WTC11 (cell line): ENCODE measurements at regions of chr2 and their contacts with region 1.

Region 1: DNA sequence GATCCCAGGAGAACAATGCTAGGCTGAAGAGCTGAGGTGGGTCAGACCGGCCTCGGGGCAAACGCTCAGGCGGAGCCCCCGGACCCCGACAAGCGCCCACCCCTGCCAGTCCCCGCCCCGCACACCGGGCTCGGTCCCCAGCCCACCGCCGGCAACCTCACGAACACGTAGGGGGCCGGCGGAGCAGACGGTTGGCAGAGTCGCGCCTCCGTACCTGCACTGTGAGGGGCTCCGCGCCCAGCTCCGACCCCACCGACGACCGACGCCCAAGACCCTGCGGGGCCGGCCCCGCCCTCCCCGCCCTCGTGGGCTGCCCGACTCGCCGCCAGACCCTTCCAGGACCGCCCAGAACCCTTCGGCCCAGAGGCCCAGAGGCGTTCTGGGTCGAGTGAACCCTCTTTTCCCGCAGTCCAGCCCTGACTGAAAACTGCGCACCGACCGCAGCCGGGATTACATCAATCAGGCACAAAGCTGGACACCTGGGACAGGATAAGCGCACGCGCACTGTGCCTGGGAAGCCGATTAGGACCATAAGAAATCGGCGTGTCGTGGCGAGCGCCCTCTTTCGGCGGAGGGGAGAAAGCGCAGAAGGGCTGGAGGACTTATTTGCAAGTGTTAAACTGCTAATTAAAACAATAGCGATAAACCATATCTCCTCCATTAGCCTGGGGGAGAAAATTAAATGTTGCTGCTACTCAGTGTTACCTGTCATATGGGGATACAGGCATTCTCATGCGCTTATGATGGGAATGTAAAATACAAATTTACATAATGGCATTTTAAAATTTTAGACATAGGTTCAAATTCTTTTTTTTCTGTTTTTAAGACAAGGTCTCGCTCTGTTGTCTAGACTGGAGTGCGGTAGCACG is 11.7 kb upstream of the DCTN1 start:
- DNase-seq: peak; percentile 96
- ATAC-seq: peak; percentile 87
- H3K4me3 Mint-ChIP-seq: no peak overlapping the region; the same call in 1 of the 2 replicates
- H3K27ac Mint-ChIP-seq: peak overlapping the region; percentile 99
- H3K4me1 Mint-ChIP-seq: peaks cover 4% of the 10 kb centered on the region; the same call in 1 of the 2 replicates
- H3K27me3 Mint-ChIP-seq: no peaks in the 10 kb centered on the region; the same call in none of the 2 replicates
- CTCF ChIP-seq: peak; percentile 92

Region 2: DNA sequence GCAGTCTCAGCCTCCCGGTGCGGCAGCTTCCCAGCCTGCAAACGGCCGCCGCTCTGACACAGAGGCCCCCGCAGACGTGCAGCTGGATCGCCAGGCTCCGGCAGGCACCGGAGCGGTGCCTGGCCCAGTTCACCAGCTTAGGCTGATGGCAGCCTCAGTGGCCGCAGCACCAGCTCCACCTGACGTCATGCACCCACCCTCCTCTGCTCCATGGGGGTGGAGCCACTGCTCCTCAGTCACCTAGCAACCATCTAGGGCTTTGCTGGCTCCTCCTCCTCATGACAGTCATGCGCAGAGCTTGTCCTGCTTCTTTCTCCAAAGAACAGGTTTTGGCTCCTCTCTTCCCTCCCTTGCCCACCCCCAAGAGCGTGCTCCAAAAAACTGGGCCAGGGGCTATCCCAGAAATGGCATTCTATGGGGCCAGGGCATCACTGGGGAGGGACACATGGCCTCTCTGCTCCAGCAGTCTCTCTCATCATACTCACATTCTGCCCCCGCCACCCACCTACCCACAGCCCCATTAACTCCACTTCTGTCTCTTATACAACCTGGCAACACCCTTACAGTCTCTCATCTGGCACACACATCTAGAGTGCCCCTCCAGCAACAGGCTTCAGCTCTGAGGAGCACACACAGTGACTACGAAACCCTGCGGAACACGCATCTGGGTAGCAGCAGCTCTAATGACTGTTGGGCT is 17.2 kb before region 1 on chr2:
- CTCF ChIA-PET with region 1: interaction called, 35 read pairs
- POLR2A ChIA-PET with region 1: interaction called, 7 read pairs
- DNase-seq: peak; percentile 87
- ATAC-seq: peak; percentile 97
- H3K4me3 Mint-ChIP-seq: peak overlapping the region; percentile 83
- H3K27ac Mint-ChIP-seq: peak overlapping the region; percentile 98
- H3K4me1 Mint-ChIP-seq: peaks cover 36% of the 10 kb centered on the region
- H3K27me3 Mint-ChIP-seq: no peaks in the 10 kb centered on the region
- CTCF ChIP-seq: no peak

Region 3: GRCh38 chr2:74379851-74380789 is 11.7 kb before region 1 on chr2 and contains the start of gene DCTN1:
- CTCF ChIA-PET with region 1: interaction called, 35 read pairs
- POLR2A ChIA-PET with region 1: interaction called, 12 read pairs
- DNase-seq: peak; percentile 46
- ATAC-seq: peak; percentile 92
- H3K4me3 Mint-ChIP-seq: peak within 1 kb of the TSS; percentile 16
- H3K27ac Mint-ChIP-seq: peak within 1 kb of the TSS; percentile 83; the same call in 1 of the 2 replicates
- H3K4me1 Mint-ChIP-seq: peaks cover 21% of the 10 kb centered on the region
- H3K27me3 Mint-ChIP-seq: no peaks in the 10 kb centered on the region
- CTCF ChIP-seq: no peak
- total RNA-seq, gene DCTN1: 165 to 179 TPM (median 168 TPM) in 3 replicates

Region 4: DNA sequence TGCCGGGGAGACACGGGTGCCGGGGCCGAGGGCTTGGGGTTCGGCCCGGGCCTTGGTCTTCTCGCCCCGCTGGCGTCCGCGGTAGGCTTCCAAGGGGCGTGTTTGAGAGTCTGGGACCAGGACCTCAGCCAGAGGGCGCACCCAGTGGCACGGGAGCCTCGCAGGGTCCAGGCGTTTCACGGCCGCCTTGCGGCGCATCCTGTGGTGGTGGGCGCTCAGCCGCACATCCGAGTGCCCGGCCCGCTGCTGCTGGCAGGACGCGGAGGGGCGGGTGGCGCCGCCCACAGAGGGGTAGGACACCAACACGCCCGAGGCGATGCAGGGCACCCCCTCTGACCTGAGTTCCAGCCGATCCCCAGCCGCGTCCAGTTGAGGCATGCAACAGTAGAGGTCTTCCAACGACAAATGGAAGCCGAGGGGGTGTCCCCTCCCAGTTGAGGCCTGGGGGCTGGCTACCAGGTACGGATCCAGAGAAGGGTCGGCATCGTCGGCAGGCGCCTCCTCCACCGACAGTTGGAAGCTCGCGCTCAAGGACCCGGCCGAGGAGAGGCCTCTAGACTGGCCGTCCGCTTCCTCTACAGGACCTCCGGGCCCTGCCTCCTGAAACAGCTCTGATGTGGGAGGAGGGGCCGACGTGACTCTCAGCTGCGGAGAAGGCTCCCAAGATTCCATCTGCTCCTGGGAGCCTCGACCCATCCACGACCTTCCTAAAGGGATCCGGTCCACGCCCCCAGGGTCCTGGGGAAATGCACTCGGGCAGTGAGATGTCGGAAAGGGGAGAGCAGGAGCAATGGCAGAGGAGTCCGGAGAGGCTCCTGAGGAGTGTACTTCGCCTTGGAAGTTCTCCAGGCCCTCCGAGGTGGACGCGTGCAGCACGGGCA is 23.3 kb after region 1 on chr2:
- CTCF ChIA-PET with region 1: interaction called, 14 read pairs
- POLR2A ChIA-PET with region 1: interaction called, 3 read pairs
- DNase-seq: peak; percentile 62
- ATAC-seq: peak; percentile 64
- H3K4me3 Mint-ChIP-seq: peak overlapping the region; percentile 63
- H3K27ac Mint-ChIP-seq: no peak overlapping the region; the same call in 1 of the 2 replicates
- H3K4me1 Mint-ChIP-seq: peaks cover 13% of the 10 kb centered on the region
- H3K27me3 Mint-ChIP-seq: peaks cover 70% of the 10 kb centered on the region
- CTCF ChIP-seq: no peak

Region 5: DNA sequence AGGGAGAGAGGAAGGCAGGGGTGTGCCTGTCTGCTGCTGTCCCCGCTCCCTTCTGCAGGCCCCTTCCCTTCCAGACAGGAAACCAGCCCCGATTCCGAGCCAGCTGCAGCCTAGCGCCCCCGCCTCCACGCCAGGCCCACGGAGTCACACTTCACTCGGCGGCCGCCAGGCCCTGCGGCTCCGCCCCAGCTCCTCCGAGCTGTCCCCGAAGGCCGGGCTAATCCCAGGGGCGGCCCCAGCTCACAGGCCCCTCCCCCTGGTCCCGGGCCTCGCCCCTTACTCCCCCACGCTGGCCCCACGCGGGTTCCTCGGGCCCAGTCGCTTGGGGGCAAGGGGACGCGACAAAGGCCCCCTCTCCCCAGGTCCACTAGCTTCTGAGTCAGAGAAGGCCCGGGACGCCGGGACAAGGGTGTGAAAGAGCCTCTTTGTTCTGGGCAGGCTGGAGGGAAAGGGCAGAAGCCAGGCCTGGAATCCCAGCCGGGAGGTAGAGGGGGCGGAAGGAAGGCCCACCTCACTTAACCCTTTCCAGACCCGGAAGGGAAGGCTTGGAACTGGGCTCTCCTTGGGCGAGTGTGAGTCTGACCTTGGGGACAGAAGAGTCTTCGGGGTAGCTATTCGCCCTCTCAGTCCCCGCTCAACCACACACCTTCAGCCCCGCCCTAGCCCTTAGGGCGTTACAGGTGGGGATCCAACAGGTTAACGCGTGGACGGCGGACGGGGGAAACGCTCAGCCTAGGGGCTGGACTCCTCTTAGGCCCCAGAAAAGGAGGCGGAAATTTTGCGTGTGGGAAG is 48.8 kb after region 1 on chr2:
- CTCF ChIA-PET with region 1: interaction called, 19 read pairs
- POLR2A ChIA-PET with region 1: interaction called, 4 read pairs
- DNase-seq: peak; percentile 83
- ATAC-seq: peak; percentile 76
- H3K4me3 Mint-ChIP-seq: peak overlapping the region; percentile 99
- H3K27ac Mint-ChIP-seq: peak overlapping the region; percentile 100
- H3K4me1 Mint-ChIP-seq: peaks cover 41% of the 10 kb centered on the region
- H3K27me3 Mint-ChIP-seq: peaks cover 12% of the 10 kb centered on the region
- CTCF ChIP-seq: no peak

Region 6: GRCh38 chr2:74653985-74654882 is 262.4 kb after region 1 on chr2 and contains the start of gene SEMA4F:
- CTCF ChIA-PET with region 1: no interaction called
- POLR2A ChIA-PET with region 1: no interaction called
- DNase-seq: peak; percentile 99
- ATAC-seq: peak; percentile 99
- H3K4me3 Mint-ChIP-seq: peak within 1 kb of the TSS; percentile 73
- H3K27ac Mint-ChIP-seq: no peak within 1 kb of the TSS
- H3K4me1 Mint-ChIP-seq: peaks cover 5% of the 10 kb centered on the region
- H3K27me3 Mint-ChIP-seq: peaks cover 68% of the 10 kb centered on the region
- CTCF ChIP-seq: no peak
- total RNA-seq, gene SEMA4F: 5.7 to 7.4 TPM (median 6.3 TPM) in 3 replicates